ENCODE measurements at regions of chr15 and their contacts with region 1.

Region 1: DNA sequence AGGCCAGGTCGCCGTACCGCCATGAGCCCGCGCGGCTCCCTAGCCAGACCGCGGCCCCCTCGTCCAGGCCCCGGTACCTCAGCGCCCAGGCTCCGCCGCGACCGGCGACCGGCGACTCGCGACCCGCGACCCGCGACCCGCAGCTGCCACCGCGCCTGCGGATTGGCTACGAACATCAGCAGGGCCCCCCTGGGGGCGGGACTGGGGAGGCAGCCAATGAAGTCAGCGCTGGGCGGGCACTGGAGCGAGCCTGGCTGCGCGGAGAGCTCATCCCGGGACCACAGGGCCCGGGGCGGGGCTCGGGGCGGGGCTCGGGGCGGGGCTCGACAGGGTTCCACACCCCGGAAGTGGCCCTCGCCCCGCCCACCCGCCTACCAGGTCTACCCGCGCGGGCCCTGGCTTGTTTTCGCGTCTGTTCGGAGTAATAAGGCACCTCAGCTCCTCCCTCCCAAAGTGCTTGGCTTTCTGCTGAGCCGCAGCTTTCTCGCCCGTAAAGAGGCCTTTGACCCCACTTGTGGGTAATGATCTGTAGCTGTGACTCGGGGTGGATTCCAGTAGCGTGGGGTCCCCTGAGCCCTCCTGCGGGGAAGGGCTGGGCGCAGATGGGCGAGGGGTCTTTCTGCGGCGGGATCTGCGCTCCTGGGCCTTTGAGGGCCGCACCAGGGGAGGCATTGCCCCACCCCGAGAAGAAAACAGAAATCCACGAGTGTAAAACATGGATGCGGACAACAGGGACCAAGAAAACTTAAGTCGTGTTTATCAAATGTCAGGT is at the start of gene LYSMD4:
- DNase-seq: peak; percentile 96 to 100 (median 98)

Region 2: GRCh38 chr15:99104788-99105513 is 628.5 kb before region 1 on chr15 and contains the start of gene SYNM:
- intact Hi-C with region 1: loop called (anchors 10 kb)
- DNase-seq: peak; percentile 59 to 97 (median 70)

Region 3: DNA sequence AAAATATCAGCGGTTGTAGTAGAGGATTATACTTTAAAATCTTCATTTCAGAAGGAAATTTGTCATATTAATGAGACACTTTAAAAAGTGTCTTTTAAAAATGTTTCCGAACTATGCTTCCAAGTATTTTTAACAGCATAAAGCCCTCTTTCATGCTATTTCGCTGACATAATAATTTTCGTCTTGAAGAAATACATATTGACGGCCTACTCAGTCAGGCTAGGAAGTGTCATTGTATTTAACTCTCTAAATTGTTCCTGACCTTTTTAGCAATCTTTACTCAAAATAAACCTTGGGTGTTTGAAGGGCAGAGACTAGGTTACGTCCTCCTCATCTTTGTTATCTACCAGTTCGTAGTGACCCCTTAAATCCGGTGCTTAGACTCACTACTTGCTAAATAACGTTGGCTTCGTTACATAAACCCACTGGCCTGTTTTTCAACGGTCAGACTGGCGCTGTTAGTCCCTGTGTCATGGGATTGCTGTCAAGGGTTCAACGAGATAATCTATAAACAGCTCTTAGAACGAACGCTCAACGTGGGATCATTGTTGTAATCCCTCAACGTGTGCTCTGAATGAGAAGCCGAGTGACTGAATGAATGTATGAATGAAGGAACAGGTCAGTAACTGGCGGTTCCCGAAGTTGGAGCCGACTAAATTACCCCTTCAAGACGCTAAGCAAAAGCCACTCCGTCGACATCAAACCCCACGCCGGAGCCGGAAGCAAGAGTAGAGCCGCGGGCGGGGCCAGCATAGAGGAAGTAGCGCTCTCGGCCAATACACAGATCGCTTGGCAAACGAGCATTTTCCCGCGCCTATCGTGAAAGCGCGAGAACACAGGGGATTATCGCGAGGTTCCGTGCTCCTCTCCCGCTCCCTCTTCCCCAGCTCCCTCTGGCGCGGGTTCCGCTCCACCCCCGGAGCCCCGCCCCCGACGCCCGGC is 482.7 kb before region 1 on chr15:
- intact Hi-C with region 1: loop called (anchors 1 kb)
- DNase-seq: peak; percentile 96 to 100 (median 98)

Region 4: DNA sequence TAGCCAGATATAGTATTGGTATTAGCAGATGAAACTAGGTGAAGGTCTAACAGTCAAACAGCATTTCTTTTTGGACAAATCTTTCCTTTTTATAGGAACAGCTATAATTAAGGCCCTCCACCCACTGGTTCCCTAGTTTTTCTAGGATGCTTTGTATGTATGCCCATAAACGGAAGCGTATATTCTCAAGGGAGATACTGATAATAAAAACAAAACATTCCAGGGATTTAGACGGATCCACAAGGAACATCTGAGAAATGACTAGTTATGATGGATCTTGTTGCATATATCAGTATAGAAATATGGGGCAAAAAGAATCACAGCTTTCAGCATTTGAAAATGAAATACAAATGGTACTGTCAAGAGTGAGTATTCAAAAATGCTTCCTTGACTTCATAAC is 459.7 kb before region 1 on chr15:
- intact Hi-C with region 1: loop called (anchors 2 kb)
- DNase-seq: no peak

Region 5: DNA sequence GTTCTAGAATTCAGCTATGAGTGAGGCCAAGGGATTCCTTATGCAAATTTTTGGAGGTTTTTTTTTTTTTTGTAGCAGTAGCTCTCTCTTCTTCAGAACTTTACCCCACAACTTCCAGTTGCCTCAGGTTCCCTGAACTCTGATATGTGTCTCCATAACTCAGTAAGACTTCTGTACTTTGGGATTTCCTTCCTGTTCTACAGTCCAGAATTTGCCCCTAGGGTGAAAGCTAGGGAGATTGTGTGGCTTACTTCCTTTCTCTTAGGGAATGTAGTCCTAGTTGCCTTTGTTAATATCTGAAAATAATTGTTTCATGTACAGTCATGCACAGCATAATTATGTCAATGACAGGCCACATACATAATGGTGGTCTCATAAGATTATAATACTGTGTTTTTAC is 451.3 kb before region 1 on chr15:
- intact Hi-C with region 1: loop called (anchors 5 kb)
- DNase-seq: no peak

Region 6: GRCh38 chr15:99565299-99566156 is 167.9 kb before region 1 on chr15 and contains the start of gene MEF2A:
- intact Hi-C with region 1: loop called (anchors 10 kb)
- DNase-seq: peak; percentile 87 to 98 (median 92)

Region 7: DNA sequence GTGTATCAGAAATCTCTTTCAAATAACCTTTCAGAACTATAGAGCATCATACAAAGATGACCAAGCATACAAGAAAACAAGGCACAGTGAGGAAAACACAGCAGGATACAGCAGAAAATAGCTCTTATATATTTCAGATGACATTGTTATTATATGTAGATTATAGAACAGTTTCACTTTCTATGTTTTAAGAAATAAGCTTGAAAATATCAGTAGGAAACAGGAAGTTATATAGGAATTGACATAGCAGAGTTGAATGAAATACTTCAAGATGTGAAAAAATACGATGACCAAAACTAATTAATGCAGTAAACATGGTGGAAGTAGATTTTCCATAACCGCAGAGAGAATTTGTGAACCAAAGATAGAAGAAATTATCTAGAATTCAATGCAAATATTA is 75.5 kb before region 1 on chr15:
- intact Hi-C with region 1: no loop called
- DNase-seq: no peak

Region 8: GRCh38 chr15:99677540-99678134 is 55.8 kb before region 1 on chr15:
- intact Hi-C with region 1: no loop called
- DNase-seq: no peak